Posterior cingulate gyrus (tissue), 11 donors: ENCODE measurements at regions of chr11 and their contacts with region 1.

Region 1: GRCh38 chr11:72048766-72049456 is 31.4 kb downstream of the NUMA1 start:
- DNase-seq: no peak

Region 2: DNA sequence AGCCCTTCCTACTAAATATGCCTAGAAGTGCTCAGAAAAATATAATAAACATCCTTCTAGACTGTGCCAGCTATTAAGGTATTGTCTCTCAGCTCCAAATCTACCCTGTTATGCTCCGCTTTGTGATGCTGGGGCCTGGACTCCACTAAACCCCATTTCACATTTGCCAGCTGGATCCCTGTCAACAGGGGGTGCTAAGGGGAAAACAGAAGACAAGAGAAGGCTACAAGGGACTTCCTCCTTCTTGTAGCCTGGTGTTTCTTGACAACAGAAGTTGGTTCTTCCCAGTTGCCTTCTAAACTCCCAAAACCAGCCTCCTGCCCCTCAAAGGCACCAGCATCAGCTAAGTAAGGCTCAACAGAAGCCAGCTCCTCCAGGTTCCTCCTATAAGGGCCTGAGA is 26.2 kb after region 1 on chr11:
- intact Hi-C with region 1: loop called (anchors 1 kb)
- DNase-seq: no peak